Panc1 (cell line): ENCODE measurements at regions of chr2 and their contacts with region 1.

Region 1: DNA sequence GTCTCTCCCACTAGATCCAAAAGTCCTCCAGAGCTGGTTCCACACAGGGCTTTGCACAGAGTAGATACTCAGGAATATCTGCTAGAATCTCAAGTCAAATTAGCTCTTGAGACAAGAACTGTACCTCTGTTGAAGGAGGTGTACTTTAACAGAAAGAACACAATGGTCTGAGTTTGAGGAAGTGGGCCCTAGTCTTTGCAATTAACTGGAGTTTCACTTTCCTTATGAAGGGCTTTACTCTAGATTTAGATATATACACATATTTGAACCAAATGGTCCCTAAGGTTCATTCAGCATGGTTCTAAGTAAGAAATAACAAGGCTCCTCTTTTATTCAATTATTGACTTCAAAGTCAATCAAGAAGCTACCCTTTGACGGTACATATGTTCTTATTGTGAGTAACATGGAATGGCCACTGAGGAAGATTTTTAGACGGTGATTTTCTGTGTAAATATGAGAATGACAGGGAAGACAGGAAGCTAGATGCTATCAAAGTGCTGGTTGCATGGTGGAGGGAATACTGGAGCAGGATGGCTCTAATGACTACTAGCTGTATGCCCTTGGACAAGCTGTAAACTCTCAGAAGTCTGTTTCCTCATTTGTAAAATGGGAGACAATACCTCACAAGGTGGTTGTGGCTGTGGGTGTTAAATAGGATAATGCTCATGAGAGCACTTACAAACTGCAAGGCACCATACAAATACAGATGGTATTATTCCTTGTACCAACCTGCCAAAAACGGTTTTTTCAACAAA is 73.5 kb upstream of the SERTAD2 start:
- DNase-seq: no peak
- ATAC-seq: peak; percentile 35
- H3K4me3 ChIP-seq: no peak overlapping the region; a peak in 1 of 4 replicates
- H3K27ac ChIP-seq: peak overlapping the region; percentile 82
- H3K4me1 ChIP-seq: peaks cover 58% of the 10 kb centered on the region
- H3K27me3 ChIP-seq: no peaks in the 10 kb centered on the region
- CTCF ChIP-seq: no peak

Region 2: GRCh38 chr2:64837959-64838591 is 110.9 kb after region 1 on chr2:
- CTCF ChIA-PET with region 1: no interaction called
- POLR2A ChIA-PET with region 1: interaction called, 11 read pairs
- in situ Hi-C with region 1: no loop called
- intact Hi-C with region 1: no loop called
- DNase-seq: no peak
- ATAC-seq: peak; percentile 35
- H3K4me3 ChIP-seq: no peak overlapping the region
- H3K27ac ChIP-seq: peak overlapping the region; percentile 65
- H3K4me1 ChIP-seq: peaks cover 9% of the 10 kb centered on the region
- H3K27me3 ChIP-seq: no peaks in the 10 kb centered on the region
- CTCF ChIP-seq: no peak